Esophagus squamous epithelium (tissue), 5 donors: ENCODE measurements at regions of chr6 and their contacts with region 1.

Region 1: GRCh38 chr6:158654960-158655489 is 5.2 kb downstream of the SYTL3 start:
- DNase-seq: no peak
- H3K4me3 ChIP-seq: no peak overlapping the region
- H3K27ac ChIP-seq: peak overlapping the region in 3 of 4 donors; percentile 76 to 87 (median 79)
- H3K4me1 ChIP-seq: peaks cover 2 to 26% (median 11%) of the 10 kb centered on the region in 3 donors
- H3K27me3 ChIP-seq: no peaks in the 10 kb centered on the region
- CTCF ChIP-seq: no peak
- POLR2A ChIP-seq: no peak

Region 2: DNA sequence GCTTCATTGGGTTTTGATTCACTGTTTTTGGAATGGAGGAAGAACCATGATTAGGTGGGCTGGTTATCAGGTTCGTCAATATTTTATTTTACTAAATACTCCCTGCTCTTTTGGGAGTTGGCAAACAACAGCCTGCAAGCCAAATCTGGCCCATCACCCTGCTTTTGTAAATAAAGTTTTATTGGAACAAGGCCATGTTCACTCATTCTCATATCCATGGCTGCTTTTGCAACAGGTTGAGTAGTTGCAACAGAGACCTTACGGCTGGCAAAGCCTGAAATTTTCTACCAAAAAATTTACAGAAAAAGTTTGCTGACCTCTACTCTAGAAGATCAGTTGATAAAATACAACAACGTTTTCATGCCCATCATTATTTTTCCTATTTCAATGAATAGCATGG is 39.9 kb after region 1 on chr6:
- intact Hi-C with region 1: loop called (anchors 5 kb)
- DNase-seq: no peak
- H3K4me3 ChIP-seq: no peak overlapping the region
- H3K27ac ChIP-seq: no peak overlapping the region
- H3K4me1 ChIP-seq: peaks cover 0 to 8% (median 5%) of the 10 kb centered on the region in 3 donors
- H3K27me3 ChIP-seq: no peaks in the 10 kb centered on the region
- CTCF ChIP-seq: no peak
- POLR2A ChIP-seq: no peak